Activated naive CD4-positive, alpha-beta T cell treated with anti-CD3 and anti-CD28 coated beads for 36 hours (primary cell): ENCODE measurements at regions of chr4 and their contacts with region 1.

Region 1: DNA sequence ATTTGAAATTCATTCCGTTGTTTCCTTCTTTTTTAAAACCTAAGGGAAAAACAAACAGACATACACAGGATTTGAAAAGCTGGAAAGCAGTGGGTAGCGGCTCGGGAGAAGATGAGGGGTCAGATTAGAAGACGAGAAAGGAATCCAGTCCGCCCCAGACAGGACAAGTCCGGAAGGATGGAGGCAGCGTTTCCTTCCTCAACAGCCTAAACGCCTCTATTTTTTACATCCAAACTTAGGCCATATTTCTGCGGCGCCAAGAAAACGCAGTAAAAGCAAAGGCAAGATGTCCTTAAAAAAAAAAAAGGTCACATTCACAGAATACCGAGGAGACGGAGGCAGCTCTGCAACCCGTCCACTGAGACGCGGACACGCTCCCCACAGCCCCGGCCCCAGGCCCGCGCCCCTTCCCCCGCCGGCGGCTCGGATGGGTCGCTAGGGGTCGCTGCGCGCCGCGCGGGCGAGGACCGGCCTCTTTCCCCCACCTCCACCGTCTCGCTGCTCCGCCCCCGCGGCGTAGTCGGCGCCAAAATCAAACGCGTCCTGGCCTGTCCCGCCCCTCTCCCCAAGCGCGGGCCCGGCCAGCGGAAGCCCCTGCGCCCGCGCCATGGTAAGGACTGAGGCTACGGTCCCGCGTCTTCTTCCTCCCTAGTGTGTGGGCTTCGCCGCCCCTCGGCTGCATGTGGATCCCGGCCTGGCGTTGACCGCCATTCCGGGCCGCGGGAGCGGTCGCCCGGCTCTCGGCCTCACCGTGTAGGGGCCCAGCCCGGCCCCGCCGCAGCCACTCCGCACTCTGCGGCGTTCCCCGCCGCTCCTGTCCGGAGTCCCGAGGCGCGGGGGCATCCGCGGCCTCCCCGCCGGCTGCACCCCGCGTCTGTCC is at the start of gene MND1:
- DNase-seq: peak; percentile 94
- H3K4me3 Mint-ChIP-seq: peak within 1 kb of the TSS; percentile 93
- H3K27ac Mint-ChIP-seq: peak within 1 kb of the TSS; percentile 92
- H3K4me1 Mint-ChIP-seq: peaks cover 33% of the 10 kb centered on the region
- H3K27me3 Mint-ChIP-seq: peaks cover 2% of the 10 kb centered on the region
- total RNA-seq, gene MND1: 51.3 to 52.6 TPM

Region 2: GRCh38 chr4:153426207-153426885 is 82.0 kb after region 1 on chr4:
- CTCF ChIA-PET with region 1: interaction called, 4 read pairs
- intact Hi-C with region 1: loop called (anchors 1 kb)
- DNase-seq: no peak
- H3K4me3 Mint-ChIP-seq: no peak overlapping the region
- H3K27ac Mint-ChIP-seq: peak overlapping the region; percentile 63
- H3K4me1 Mint-ChIP-seq: peaks cover 65% of the 10 kb centered on the region
- H3K27me3 Mint-ChIP-seq: no peaks in the 10 kb centered on the region

Region 3: GRCh38 chr4:153466081-153466948 is 121.9 kb after region 1 on chr4 and contains the start of gene TMEM131L:
- CTCF ChIA-PET with region 1: interaction called, 7 read pairs
- intact Hi-C with region 1: loop called (anchors 1 kb)
- DNase-seq: peak; percentile 67
- H3K4me3 Mint-ChIP-seq: peak within 1 kb of the TSS; percentile 95
- H3K27ac Mint-ChIP-seq: peak within 1 kb of the TSS; percentile 96
- H3K4me1 Mint-ChIP-seq: peaks cover 35% of the 10 kb centered on the region
- H3K27me3 Mint-ChIP-seq: no peaks in the 10 kb centered on the region
- total RNA-seq, gene TMEM131L: 37.6 to 41.6 TPM

Region 4: GRCh38 chr4:153573881-153574802 is 229.8 kb after region 1 on chr4:
- CTCF ChIA-PET with region 1: interaction called, 7 read pairs
- intact Hi-C with region 1: loop called (anchors 1 kb)
- DNase-seq: peak; percentile 78
- H3K4me3 Mint-ChIP-seq: no peak overlapping the region
- H3K27ac Mint-ChIP-seq: peak overlapping the region; percentile 74
- H3K4me1 Mint-ChIP-seq: peaks cover 76% of the 10 kb centered on the region
- H3K27me3 Mint-ChIP-seq: no peaks in the 10 kb centered on the region

Region 5: GRCh38 chr4:153684182-153684970 is 340.0 kb after region 1 on chr4 and contains the start of gene TLR2:
- CTCF ChIA-PET with region 1: no interaction called
- intact Hi-C with region 1: loop called (anchors 1 kb)
- DNase-seq: peak; percentile 83
- H3K4me3 Mint-ChIP-seq: peak within 1 kb of the TSS; percentile 78
- H3K27ac Mint-ChIP-seq: peak within 1 kb of the TSS; percentile 18
- H3K4me1 Mint-ChIP-seq: peaks cover 13% of the 10 kb centered on the region
- H3K27me3 Mint-ChIP-seq: peaks cover 14% of the 10 kb centered on the region
- total RNA-seq, gene TLR2: 1.5 to 2.6 TPM

Region 6: DNA sequence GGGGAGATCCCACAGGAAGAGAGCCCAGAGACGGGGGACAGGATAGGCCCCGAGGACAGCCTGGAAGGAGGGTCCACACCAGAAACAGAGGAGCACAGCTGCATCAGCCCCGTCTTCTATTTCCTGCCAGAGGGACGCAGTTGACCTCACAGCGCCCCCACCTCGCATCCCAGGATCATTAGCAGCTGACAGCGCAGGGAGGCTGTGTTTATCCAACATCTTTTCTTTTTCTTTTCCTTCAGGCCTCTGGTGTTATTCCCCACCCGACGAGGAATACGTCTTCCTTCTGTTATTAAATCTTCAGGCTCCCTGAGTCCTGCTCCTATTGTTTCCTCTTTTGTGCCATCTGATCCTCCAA is 1071.8 kb after region 1 on chr4:
- CTCF ChIA-PET with region 1: no interaction called
- intact Hi-C with region 1: no loop called
- DNase-seq: peak; percentile 25
- H3K4me3 Mint-ChIP-seq: peak overlapping the region; percentile 50
- H3K27ac Mint-ChIP-seq: no peak overlapping the region
- H3K4me1 Mint-ChIP-seq: peaks cover 15% of the 10 kb centered on the region
- H3K27me3 Mint-ChIP-seq: peaks cover 37% of the 10 kb centered on the region